RWPE1 (cell line): ENCODE measurements at regions of chr4 and their contacts with region 1.

Region 1: GRCh38 chr4:103099691-103100392 is at the start of gene BDH2:
- DNase-seq: peak; percentile 88
- H3K27ac ChIP-seq: no peak within 1 kb of the TSS
- CTCF ChIP-seq: peak; percentile 68

Region 2: GRCh38 chr4:102362922-102363432 is 736.9 kb before region 1 on chr4:
- CTCF ChIA-PET with region 1: no interaction called
- POLR2A ChIA-PET with region 1: interaction called, 10 read pairs
- DNase-seq: no peak
- H3K27ac ChIP-seq: no peak overlapping the region
- CTCF ChIP-seq: no peak